MCF 10A (cell line): ENCODE measurements at regions of chr6 and their contacts with region 1.

Region 1: GRCh38 chr6:134938896-134939295 is 11.0 kb downstream of the ALDH8A1 start:
- DNase-seq: no peak
- H3K4me3 Mint-ChIP-seq: no peak overlapping the region
- H3K27ac Mint-ChIP-seq: no peak overlapping the region
- H3K4me1 Mint-ChIP-seq: no peaks in the 10 kb centered on the region
- H3K27me3 Mint-ChIP-seq: no peaks in the 10 kb centered on the region
- CTCF ChIP-seq: no peak

Region 2: GRCh38 chr6:134123666-134124208 is 815.2 kb before region 1 on chr6:
- CTCF ChIA-PET with region 1: interaction called, 34 read pairs
- POLR2A ChIA-PET with region 1: interaction called, 7 read pairs
- intact Hi-C with region 1: no loop called
- DNase-seq: peak; percentile 75
- H3K4me3 Mint-ChIP-seq: no peak overlapping the region
- H3K27ac Mint-ChIP-seq: no peak overlapping the region
- H3K4me1 Mint-ChIP-seq: peaks cover 5% of the 10 kb centered on the region
- H3K27me3 Mint-ChIP-seq: no peaks in the 10 kb centered on the region
- CTCF ChIP-seq: peak; percentile 35

Region 3: DNA sequence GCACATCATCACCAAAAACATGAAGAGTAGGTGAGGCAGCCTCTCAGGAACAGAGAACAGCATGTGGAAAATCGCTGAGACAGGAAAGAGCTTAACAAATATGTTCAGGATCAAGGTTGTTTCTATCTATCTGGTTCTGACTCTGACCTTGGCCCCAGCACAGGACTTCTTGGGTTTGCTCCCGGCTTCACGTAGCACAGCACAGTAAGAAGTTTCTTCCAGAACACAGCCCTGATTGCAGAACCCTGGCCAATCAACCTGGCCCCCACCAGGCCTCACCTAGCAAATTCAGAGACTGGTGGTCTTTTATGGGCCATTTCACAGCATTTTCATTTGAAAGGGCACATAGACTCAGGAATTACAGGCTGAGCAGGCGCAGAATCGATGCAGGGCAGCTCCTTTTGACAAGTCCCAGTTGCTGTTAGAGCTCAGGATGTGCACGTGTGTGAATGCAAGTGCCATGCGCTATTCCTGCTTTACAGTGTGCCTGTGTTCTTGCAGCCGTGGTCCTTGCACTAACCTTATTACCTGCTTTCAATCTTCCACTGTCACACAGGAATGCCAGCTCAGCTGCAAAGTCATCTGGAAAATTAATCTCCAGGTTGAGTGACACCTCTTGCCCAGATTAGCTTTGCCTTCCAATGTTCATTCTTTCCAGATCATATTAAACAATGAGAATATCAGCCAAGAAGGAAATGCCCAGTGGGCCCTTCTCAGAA is 786.0 kb before region 1 on chr6:
- CTCF ChIA-PET with region 1: interaction called, 47 read pairs
- POLR2A ChIA-PET with region 1: interaction called, 6 read pairs
- intact Hi-C with region 1: loop called (anchors 1 kb)
- DNase-seq: no peak
- H3K4me3 Mint-ChIP-seq: no peak overlapping the region
- H3K27ac Mint-ChIP-seq: no peak overlapping the region
- H3K4me1 Mint-ChIP-seq: no peaks in the 10 kb centered on the region
- H3K27me3 Mint-ChIP-seq: no peaks in the 10 kb centered on the region
- CTCF ChIP-seq: no peak

Region 4: GRCh38 chr6:134830940-134831339 is 108.0 kb before region 1 on chr6:
- CTCF ChIA-PET with region 1: interaction called, 55 read pairs
- POLR2A ChIA-PET with region 1: interaction called, 26 read pairs
- intact Hi-C with region 1: loop called (anchors 1 kb)
- DNase-seq: no peak
- H3K4me3 Mint-ChIP-seq: no peak overlapping the region
- H3K27ac Mint-ChIP-seq: no peak overlapping the region
- H3K4me1 Mint-ChIP-seq: peaks cover 16% of the 10 kb centered on the region
- H3K27me3 Mint-ChIP-seq: no peaks in the 10 kb centered on the region
- CTCF ChIP-seq: no peak

Region 5: DNA sequence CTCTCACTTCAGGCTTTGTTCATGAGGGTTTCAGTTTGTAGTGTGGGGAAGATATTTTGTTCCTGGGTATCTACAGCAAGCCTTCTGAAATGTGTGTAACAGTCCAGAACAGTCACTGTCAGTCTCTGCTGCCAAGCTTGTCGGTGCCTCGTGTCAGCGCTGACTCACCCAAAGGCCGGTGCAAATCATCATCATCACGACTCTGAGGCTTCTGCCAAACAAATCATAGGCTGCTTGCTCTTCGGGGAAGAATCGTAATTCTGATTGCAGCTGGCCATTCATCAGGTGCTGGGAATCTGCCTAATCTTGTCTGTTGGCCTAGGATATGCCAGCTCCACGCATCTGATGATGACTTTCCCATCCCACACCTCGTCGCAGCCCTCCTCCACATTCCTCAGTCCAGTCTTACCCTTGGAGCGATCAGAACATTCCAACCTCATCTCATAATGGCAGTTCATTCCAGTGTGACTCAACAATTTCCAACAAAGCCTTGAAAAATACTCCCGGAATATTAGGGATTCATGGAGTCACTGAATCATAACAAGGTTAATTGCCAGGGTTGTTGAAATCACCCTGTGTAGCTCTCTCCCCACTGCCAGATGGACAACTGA is 29.9 kb before region 1 on chr6:
- CTCF ChIA-PET with region 1: interaction called, 27 read pairs
- POLR2A ChIA-PET with region 1: interaction called, 22 read pairs
- intact Hi-C with region 1: no loop called
- DNase-seq: peak; percentile 98
- H3K4me3 Mint-ChIP-seq: peak overlapping the region; percentile 28
- H3K27ac Mint-ChIP-seq: peak overlapping the region; percentile 81
- H3K4me1 Mint-ChIP-seq: peaks cover 31% of the 10 kb centered on the region
- H3K27me3 Mint-ChIP-seq: no peaks in the 10 kb centered on the region
- CTCF ChIP-seq: no peak